ENCODE measurements at regions of chr16 and their contacts with region 1.

Region 1: GRCh38 chr16:85086347-85087291 is 25.7 kb downstream of the CIBAR2 start:
- DNase-seq: peak; percentile 62
- H3K4me3 ChIP-seq: no peak overlapping the region
- H3K27ac ChIP-seq: no peak overlapping the region
- H3K4me1 ChIP-seq: peaks cover 26% of the 10 kb centered on the region
- H3K27me3 ChIP-seq: no peaks in the 10 kb centered on the region
- CTCF ChIP-seq: peak; percentile 82 to 85

Region 2: GRCh38 chr16:84754353-84754856 is 332.2 kb before region 1 on chr16:
- CTCF ChIA-PET with region 1: no interaction called
- dilution Hi-C with region 1: no loop called
- in situ Hi-C with region 1: no loop called
- intact Hi-C with region 1: loop called (anchors 1 kb)
- DNase-seq: peak; percentile 84
- H3K4me3 ChIP-seq: peak overlapping the region in 2 of 3 experiments; percentile 6 to 34
- H3K27ac ChIP-seq: peak overlapping the region; percentile 85
- H3K4me1 ChIP-seq: peaks cover 35% of the 10 kb centered on the region
- H3K27me3 ChIP-seq: no peaks in the 10 kb centered on the region
- CTCF ChIP-seq: peak; percentile 77 to 80

Region 3: GRCh38 chr16:84925092-84925772 is 161.4 kb before region 1 on chr16:
- CTCF ChIA-PET with region 1: interaction called, 3 read pairs
- dilution Hi-C with region 1: no loop called
- in situ Hi-C with region 1: no loop called
- intact Hi-C with region 1: loop called (anchors 1 kb)
- DNase-seq: no peak
- H3K4me3 ChIP-seq: no peak overlapping the region
- H3K27ac ChIP-seq: no peak overlapping the region
- H3K4me1 ChIP-seq: no peaks in the 10 kb centered on the region
- H3K27me3 ChIP-seq: no peaks in the 10 kb centered on the region
- CTCF ChIP-seq: peak; percentile 81 to 92

Region 4: GRCh38 chr16:84985079-84986065 is 101.2 kb before region 1 on chr16:
- CTCF ChIA-PET with region 1: no interaction called
- dilution Hi-C with region 1: no loop called
- in situ Hi-C with region 1: no loop called
- intact Hi-C with region 1: loop called (anchors 5 kb)
- DNase-seq: peak; percentile 77
- H3K4me3 ChIP-seq: no peak overlapping the region
- H3K27ac ChIP-seq: peak overlapping the region; percentile 57
- H3K4me1 ChIP-seq: peaks cover 20% of the 10 kb centered on the region
- H3K27me3 ChIP-seq: no peaks in the 10 kb centered on the region
- CTCF ChIP-seq: no peak

Region 5: DNA sequence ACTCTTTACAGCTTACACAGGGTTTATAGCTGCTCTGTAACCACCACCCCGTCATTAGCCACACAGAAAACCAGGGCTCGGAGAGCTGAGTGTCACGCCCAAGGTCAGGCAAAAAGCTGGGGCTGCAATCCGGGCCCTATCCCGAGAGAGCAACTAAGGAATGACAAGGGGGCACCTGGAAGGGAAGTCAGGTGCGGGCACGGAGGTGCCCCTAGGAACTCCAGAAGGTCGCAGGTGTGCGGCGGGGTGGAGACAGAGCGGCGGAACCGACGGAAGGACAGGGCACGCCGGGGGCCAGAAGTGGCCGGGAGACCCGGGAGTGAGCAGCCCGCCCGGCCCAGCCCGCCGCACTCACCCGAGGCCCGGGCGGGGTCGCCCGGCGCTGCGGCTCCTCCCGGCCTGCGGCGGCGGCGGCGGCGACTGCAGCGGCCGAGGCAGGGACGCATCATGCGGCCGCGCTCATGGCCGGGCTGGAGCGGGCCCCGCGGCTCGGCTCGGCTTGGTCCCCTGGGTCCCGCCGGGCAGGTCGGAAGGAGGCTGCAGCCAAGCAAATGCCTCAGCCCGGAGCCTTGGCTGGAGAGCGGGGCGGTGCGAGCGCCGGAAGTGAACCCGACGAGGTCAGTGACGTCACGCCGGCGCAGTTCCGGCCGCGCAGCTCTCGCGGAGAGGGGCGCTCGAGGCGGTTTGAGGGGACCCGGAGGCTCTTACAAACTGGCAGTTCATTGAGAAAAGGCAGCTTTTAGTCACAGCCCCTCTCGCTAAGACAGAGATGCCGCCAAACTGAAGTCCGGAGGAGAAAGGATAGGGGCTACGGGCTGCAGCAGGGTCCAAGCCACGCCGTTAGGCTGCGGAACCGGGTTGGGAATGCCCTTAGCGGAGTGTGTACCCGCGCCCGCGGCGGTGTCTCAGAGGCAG is 75.4 kb before region 1 on chr16 and contains the start of gene ZDHHC7:
- CTCF ChIA-PET with region 1: no interaction called
- dilution Hi-C with region 1: no loop called
- in situ Hi-C with region 1: no loop called
- intact Hi-C with region 1: loop called (anchors 1 kb)
- DNase-seq: peak; percentile 77
- H3K4me3 ChIP-seq: peak within 1 kb of the TSS; percentile 68 to 96 (median 78)
- H3K27ac ChIP-seq: peak within 1 kb of the TSS; percentile 80
- H3K4me1 ChIP-seq: peaks cover 14% of the 10 kb centered on the region
- H3K27me3 ChIP-seq: no peaks in the 10 kb centered on the region
- CTCF ChIP-seq: no peak
- total RNA-seq, gene ZDHHC7: 46.9 to 83.4 TPM

Region 6: GRCh38 chr16:85028685-85029407 is 57.8 kb before region 1 on chr16:
- CTCF ChIA-PET with region 1: interaction called, 3 read pairs
- dilution Hi-C with region 1: no loop called
- in situ Hi-C with region 1: no loop called
- intact Hi-C with region 1: loop called (anchors 1 kb)
- DNase-seq: peak; percentile 90
- H3K4me3 ChIP-seq: peak overlapping the region; percentile 52 to 84 (median 63)
- H3K27ac ChIP-seq: no peak overlapping the region
- H3K4me1 ChIP-seq: peaks cover 29% of the 10 kb centered on the region
- H3K27me3 ChIP-seq: no peaks in the 10 kb centered on the region
- CTCF ChIP-seq: no peak

Region 7: GRCh38 chr16:85126705-85127419 is 40.2 kb after region 1 on chr16:
- CTCF ChIA-PET with region 1: no interaction called
- dilution Hi-C with region 1: no loop called
- in situ Hi-C with region 1: no loop called
- intact Hi-C with region 1: no loop called
- DNase-seq: peak; percentile 40
- H3K4me3 ChIP-seq: no peak overlapping the region
- H3K27ac ChIP-seq: no peak overlapping the region
- H3K4me1 ChIP-seq: peaks cover 33% of the 10 kb centered on the region
- H3K27me3 ChIP-seq: no peaks in the 10 kb centered on the region
- CTCF ChIP-seq: no peak